MCF 10A (cell line): ENCODE measurements at regions of chr3 and their contacts with region 1.

Region 1: GRCh38 chr3:111904376-111905241 is 45.5 kb downstream of the PHLDB2 start:
- DNase-seq: peak; percentile 94
- H3K4me3 Mint-ChIP-seq: no peak overlapping the region
- H3K27ac Mint-ChIP-seq: peak overlapping the region; percentile 81
- H3K4me1 Mint-ChIP-seq: peaks cover 33% of the 10 kb centered on the region
- H3K27me3 Mint-ChIP-seq: no peaks in the 10 kb centered on the region
- CTCF ChIP-seq: peak; percentile 23

Region 2: DNA sequence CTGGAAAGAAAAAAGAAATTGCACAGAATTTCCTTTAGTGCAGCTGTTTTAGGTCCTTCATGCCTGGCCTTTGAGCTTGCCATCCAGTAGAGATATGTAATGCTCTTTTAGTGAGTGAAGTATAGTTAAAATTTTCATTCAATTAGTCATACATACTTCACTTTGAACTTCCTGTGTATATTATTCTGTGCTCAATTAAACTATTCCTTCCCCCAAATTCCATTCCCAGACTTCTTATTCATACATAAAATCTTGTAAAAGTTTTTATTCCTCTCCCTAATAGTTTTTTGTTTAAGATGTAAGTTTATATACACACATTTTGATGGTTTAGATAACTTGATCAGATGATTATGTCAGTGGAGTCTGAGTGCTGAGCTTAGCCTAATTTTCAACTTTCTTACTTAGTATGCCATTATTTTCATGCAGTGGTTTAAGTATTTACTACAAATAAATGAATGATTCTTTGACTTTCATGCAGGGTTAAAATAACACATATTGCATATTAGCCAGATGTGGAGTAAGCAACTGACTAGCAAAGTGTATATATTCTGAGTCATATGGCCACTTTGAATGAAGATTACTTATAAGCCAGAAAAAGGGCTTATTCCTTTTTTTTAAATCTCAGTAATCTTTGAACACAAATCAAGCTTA is 31.7 kb after region 1 on chr3:
- CTCF ChIA-PET with region 1: interaction called, 3 read pairs
- POLR2A ChIA-PET with region 1: interaction called, 13 read pairs
- intact Hi-C with region 1: loop called (anchors 2 kb)
- DNase-seq: peak; percentile 19
- H3K4me3 Mint-ChIP-seq: peak overlapping the region; percentile 25
- H3K27ac Mint-ChIP-seq: peak overlapping the region; percentile 87
- H3K4me1 Mint-ChIP-seq: peaks cover 11% of the 10 kb centered on the region
- H3K27me3 Mint-ChIP-seq: no peaks in the 10 kb centered on the region
- CTCF ChIP-seq: no peak

Region 3: GRCh38 chr3:111944377-111944776 is 39.8 kb after region 1 on chr3:
- CTCF ChIA-PET with region 1: no interaction called
- POLR2A ChIA-PET with region 1: no interaction called
- intact Hi-C with region 1: loop called (anchors 2 kb)
- DNase-seq: peak; percentile 36
- H3K4me3 Mint-ChIP-seq: no peak overlapping the region
- H3K27ac Mint-ChIP-seq: peak overlapping the region; percentile 22
- H3K4me1 Mint-ChIP-seq: peaks cover 14% of the 10 kb centered on the region
- H3K27me3 Mint-ChIP-seq: no peaks in the 10 kb centered on the region
- CTCF ChIP-seq: no peak

Region 4: GRCh38 chr3:111978493-111979433 is 74.2 kb after region 1 on chr3 and contains the start of gene ABHD10:
- CTCF ChIA-PET with region 1: no interaction called
- POLR2A ChIA-PET with region 1: interaction called, 16 read pairs
- intact Hi-C with region 1: no loop called
- DNase-seq: peak; percentile 98
- H3K4me3 Mint-ChIP-seq: peak within 1 kb of the TSS; percentile 85
- H3K27ac Mint-ChIP-seq: peak within 1 kb of the TSS; percentile 66
- H3K4me1 Mint-ChIP-seq: peaks cover 5% of the 10 kb centered on the region
- H3K27me3 Mint-ChIP-seq: no peaks in the 10 kb centered on the region
- CTCF ChIP-seq: no peak
- total RNA-seq, gene ABHD10: 26.0 and 34.1 TPM in 2 replicates

Region 5: DNA sequence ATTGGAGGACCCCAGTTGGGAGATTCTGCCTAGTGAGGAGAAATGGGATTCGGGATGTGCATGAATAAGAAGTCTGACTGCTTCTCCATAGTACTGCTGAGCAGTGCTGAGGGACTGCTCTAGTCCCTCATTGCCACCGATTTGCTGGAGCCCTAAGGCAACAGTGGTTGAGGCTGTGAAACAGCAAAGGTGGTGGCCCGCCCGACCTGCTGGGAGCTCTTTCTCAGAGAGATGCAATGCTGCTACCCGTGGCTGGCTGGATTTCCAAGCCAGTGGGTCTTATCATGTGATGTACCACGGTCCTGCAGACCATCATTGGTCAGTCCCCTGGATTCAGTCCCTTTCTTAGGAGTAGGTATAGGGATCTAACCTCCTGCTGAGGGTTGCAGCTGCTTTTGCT is 271.0 kb after region 1 on chr3:
- CTCF ChIA-PET with region 1: no interaction called
- POLR2A ChIA-PET with region 1: no interaction called
- intact Hi-C with region 1: no loop called
- DNase-seq: no peak
- H3K4me3 Mint-ChIP-seq: no peak overlapping the region
- H3K27ac Mint-ChIP-seq: no peak overlapping the region
- H3K4me1 Mint-ChIP-seq: no peaks in the 10 kb centered on the region
- H3K27me3 Mint-ChIP-seq: no peaks in the 10 kb centered on the region
- CTCF ChIP-seq: no peak